K562 (cell line): ENCODE measurements at regions of chr6 and their contacts with region 1.

Region 1: GRCh38 chr6:593139-593906 is 63.6 kb downstream of the HUS1B start:
- DNase-seq: peak; percentile 54 to 81 (median 60)
- ATAC-seq: peak; percentile 92
- H3K4me3 ChIP-seq: no peak overlapping the region
- H3K27ac ChIP-seq: no peak overlapping the region
- H3K4me1 ChIP-seq: no peaks in the 10 kb centered on the region
- H3K27me3 ChIP-seq: no peaks in the 10 kb centered on the region
- CTCF ChIP-seq: peak; percentile 51 to 87 (median 60); a peak in 4 of 6 replicates
- EP300 ChIP-seq: no peak
- POLR2A ChIP-seq: no peak
- RAD21 ChIP-seq: peak; percentile 90 to 92

Region 2: DNA sequence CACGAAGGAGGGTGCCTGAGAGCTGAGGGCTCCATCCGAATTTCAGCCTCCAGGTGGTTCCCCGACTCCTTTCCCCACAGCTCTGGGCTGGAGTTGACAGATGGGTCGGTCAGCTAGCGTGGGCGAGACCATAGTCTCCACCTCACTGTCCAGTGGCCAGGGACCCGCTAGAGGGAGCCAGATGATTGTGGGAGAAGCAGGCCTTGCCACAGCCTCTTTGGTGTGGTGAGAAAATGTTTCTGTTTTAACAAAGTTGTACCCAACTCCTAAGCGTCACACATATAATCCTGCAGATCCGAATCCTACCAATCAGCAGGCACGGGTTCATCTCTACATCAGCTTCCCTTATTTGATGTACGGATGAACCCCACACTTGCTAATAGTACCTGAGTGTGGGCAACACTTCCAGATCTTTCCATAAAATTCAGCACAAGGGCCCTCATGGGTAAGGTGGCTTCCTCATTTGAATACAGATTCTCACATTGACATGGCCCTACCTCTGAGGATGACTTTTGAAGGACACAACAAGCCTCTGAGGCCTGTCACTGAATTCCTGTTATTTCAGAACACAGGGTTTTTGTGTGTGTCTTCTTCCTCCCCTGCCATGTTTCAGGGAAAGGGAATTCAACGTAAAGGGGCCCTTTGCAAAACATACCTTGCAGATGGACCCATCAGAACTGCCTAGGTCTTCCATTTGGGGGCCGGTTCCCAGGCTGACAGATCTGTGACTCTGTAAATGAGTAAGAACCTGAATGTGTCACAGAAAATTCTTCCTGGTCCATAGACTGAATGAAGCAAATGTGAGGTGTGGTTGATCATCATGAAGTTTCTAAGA is 404.3 kb before region 1 on chr6:
- CTCF ChIA-PET with region 1: interaction called, 4 read pairs
- POLR2A ChIA-PET with region 1: no interaction called
- in situ Hi-C with region 1: no loop called
- intact Hi-C with region 1: loop called (anchors 5 kb)
- DNase-seq: peak; percentile 82 to 88 (median 86)
- ATAC-seq: peak; percentile 98
- H3K4me3 ChIP-seq: no peak overlapping the region
- H3K27ac ChIP-seq: no peak overlapping the region
- H3K4me1 ChIP-seq: peaks cover 0 to 10% of the 10 kb centered on the region in 2 experiments; a peak in 3 of 5 replicates
- H3K27me3 ChIP-seq: peaks cover 5 to 33% of the 10 kb centered on the region in 2 experiments; a peak in 4 of 5 replicates
- CTCF ChIP-seq: peak; percentile 95 to 97 (median 97)
- EP300 ChIP-seq: no peak
- POLR2A ChIP-seq: no peak
- RAD21 ChIP-seq: peak; percentile 92 to 93

Region 3: DNA sequence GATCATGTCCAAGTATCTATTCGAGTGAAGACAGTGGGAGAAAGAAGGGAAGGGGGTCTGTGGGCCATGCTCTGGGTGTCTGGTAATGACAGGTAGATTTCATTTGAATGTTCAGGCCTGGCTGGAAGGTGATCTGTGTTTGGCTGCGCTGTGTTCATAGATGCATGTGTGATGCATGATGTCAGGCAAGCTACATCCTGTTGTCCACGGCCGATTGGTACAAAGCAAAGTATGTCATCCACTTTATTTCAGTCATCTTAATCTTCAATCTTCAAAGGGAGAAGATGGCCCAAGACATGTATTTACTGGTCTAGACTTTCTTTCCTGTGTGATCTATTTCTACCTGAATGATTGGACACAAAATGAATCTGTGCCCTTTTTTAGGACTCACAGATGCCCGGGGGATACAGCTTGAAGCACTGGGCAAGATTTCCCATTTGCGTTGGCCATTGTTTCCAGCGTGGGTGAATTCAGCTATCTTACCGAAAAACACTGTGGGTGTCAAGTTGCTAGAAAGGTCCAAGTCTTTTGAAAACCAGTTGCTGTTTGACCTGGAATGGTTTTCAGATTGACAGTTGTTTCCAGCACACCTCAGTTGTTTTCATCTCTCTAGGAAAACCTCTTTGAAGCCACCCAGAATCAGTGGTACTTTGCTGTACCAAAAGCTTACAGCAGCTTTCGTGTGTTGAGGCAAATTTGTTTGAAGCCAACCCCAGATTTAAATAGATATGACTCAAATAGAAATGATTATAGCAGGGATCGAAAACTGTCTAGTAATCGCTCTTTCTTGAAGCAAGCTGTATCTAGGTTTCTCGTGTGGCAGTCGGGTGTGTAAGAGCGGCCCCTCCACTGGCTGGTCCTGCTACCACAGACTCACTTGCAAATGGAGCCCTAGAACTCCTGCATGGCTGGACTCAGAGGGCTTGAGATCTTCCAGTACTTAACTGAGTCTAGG is 273.9 kb before region 1 on chr6:
- CTCF ChIA-PET with region 1: no interaction called
- POLR2A ChIA-PET with region 1: no interaction called
- in situ Hi-C with region 1: no loop called
- intact Hi-C with region 1: no loop called
- DNase-seq: no peak
- ATAC-seq: no peak
- H3K4me3 ChIP-seq: no peak overlapping the region
- H3K27ac ChIP-seq: no peak overlapping the region
- H3K4me1 ChIP-seq: no peaks in the 10 kb centered on the region; a peak in 1 of 5 replicates
- H3K27me3 ChIP-seq: peaks cover 3 to 48% of the 10 kb centered on the region in 2 experiments; a peak in 4 of 5 replicates
- CTCF ChIP-seq: no peak
- EP300 ChIP-seq: no peak
- POLR2A ChIP-seq: no peak
- RAD21 ChIP-seq: no peak

Region 4: DNA sequence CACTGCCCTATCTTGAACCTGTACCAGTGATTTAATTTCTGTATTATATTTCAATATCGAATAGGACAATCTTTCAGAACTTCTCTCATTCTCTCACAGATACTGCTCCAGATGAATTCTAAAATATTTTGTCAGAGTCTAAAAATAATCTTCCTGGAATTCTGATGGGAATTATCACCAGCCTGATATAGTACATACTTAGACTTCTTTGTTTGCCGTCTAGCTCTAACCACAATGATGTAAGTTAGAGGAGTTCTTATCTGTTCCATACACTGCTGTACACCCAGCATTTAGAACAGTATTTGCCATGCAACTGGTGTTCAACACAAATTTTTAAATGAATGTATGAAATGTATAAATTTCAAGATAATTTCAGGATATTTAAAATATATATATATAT is 64.9 kb after region 1 on chr6:
- CTCF ChIA-PET with region 1: no interaction called
- POLR2A ChIA-PET with region 1: no interaction called
- in situ Hi-C with region 1: no loop called
- intact Hi-C with region 1: loop called (anchors 5 kb)
- DNase-seq: peak; percentile 30 to 72 (median 50)
- ATAC-seq: peak; percentile 89
- H3K4me3 ChIP-seq: no peak overlapping the region
- H3K27ac ChIP-seq: no peak overlapping the region; the same call in 2 of the 3 replicates
- H3K4me1 ChIP-seq: peaks cover 23 to 25% of the 10 kb centered on the region in 2 experiments
- H3K27me3 ChIP-seq: no peaks in the 10 kb centered on the region
- CTCF ChIP-seq: no peak
- EP300 ChIP-seq: peak; percentile 74; the same call in 1 of the 2 replicates
- POLR2A ChIP-seq: no peak
- RAD21 ChIP-seq: no peak

Region 5: DNA sequence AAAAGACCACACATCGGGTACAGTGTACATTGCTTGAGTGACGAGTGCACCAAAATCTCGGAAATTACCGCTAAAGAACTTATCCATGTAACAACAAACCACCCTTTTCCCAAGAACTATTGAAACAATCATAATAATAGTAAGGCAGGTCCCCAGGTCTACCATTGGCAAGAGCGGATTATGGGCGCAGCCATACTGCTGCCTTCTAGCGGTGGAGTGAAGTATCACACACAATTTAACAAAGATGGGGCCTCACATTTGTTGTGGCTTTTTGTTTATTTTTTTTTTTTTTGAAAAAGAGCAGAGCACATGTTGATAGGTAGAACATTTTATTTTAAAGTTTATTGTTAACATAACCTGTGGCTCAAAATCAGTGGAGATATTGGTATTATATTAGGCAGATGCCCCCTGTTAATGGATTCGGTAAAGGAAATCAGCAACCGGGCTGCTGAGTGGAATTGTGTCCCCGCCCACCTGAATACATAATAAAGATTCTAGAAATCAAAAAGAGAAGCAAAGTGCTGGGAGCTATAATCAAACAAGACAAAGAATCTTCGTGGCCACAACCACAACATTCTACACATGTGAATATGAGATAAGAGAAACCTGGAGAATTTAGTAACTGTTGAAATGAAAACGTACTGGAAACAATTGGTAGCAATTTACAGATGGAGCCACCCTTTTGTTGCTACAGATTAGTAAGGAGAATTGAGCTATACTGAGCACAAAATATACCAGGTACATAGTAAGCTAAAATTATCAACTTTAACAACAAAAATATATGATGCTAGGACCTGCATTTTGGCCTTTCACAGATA is 193.8 kb after region 1 on chr6:
- CTCF ChIA-PET with region 1: interaction called, 3 read pairs
- POLR2A ChIA-PET with region 1: no interaction called
- in situ Hi-C with region 1: loop called (anchors 10 kb)
- intact Hi-C with region 1: loop called (anchors 1 kb)
- DNase-seq: peak; percentile 59 to 64 (median 62)
- ATAC-seq: peak; percentile 91
- H3K4me3 ChIP-seq: no peak overlapping the region
- H3K27ac ChIP-seq: no peak overlapping the region
- H3K4me1 ChIP-seq: peaks cover 0 to 1% of the 10 kb centered on the region in 2 experiments; a peak in 2 of 5 replicates
- H3K27me3 ChIP-seq: peaks cover 12 to 29% of the 10 kb centered on the region in 2 experiments; a peak in 4 of 5 replicates
- CTCF ChIP-seq: peak; percentile 80 to 82 (median 80)
- EP300 ChIP-seq: no peak
- POLR2A ChIP-seq: no peak
- RAD21 ChIP-seq: peak; percentile 54 to 77

Region 6: GRCh38 chr6:1381481-1382330 is 788.4 kb after region 1 on chr6:
- CTCF ChIA-PET with region 1: interaction called, 3 read pairs
- POLR2A ChIA-PET with region 1: no interaction called
- in situ Hi-C with region 1: no loop called
- intact Hi-C with region 1: loop called (anchors 5 kb)
- DNase-seq: peak; percentile 58 to 84 (median 80)
- ATAC-seq: peak; percentile 95
- H3K4me3 ChIP-seq: no peak overlapping the region
- H3K27ac ChIP-seq: no peak overlapping the region
- H3K4me1 ChIP-seq: peaks cover 0 to 37% of the 10 kb centered on the region in 2 experiments; a peak in 2 of 5 replicates
- H3K27me3 ChIP-seq: peaks cover 55 to 94% of the 10 kb centered on the region in 2 experiments
- CTCF ChIP-seq: peak; percentile 64 to 86 (median 71)
- EP300 ChIP-seq: no peak
- POLR2A ChIP-seq: no peak
- RAD21 ChIP-seq: peak; percentile 84 to 88

Region 7: GRCh38 chr6:1424306-1424928 is 831.1 kb after region 1 on chr6:
- CTCF ChIA-PET with region 1: no interaction called
- POLR2A ChIA-PET with region 1: no interaction called
- in situ Hi-C with region 1: loop called (anchors 25 kb)
- intact Hi-C with region 1: no loop called
- DNase-seq: peak in 2 of 4 experiments; percentile 51 to 57
- ATAC-seq: peak; percentile 93
- H3K4me3 ChIP-seq: no peak overlapping the region
- H3K27ac ChIP-seq: no peak overlapping the region
- H3K4me1 ChIP-seq: no peaks in the 10 kb centered on the region; a peak in 1 of 5 replicates
- H3K27me3 ChIP-seq: peaks cover 7 to 19% of the 10 kb centered on the region in 2 experiments; a peak in 3 of 5 replicates
- CTCF ChIP-seq: peak; percentile 59 to 74 (median 61)
- EP300 ChIP-seq: no peak
- POLR2A ChIP-seq: no peak
- RAD21 ChIP-seq: peak in 1 of 2 experiments; percentile 31; a peak in 1 of 4 replicates